Heart right ventricle (tissue), 16 donors: ENCODE measurements at regions of chr1 and their contacts with region 1.

Region 1: DNA sequence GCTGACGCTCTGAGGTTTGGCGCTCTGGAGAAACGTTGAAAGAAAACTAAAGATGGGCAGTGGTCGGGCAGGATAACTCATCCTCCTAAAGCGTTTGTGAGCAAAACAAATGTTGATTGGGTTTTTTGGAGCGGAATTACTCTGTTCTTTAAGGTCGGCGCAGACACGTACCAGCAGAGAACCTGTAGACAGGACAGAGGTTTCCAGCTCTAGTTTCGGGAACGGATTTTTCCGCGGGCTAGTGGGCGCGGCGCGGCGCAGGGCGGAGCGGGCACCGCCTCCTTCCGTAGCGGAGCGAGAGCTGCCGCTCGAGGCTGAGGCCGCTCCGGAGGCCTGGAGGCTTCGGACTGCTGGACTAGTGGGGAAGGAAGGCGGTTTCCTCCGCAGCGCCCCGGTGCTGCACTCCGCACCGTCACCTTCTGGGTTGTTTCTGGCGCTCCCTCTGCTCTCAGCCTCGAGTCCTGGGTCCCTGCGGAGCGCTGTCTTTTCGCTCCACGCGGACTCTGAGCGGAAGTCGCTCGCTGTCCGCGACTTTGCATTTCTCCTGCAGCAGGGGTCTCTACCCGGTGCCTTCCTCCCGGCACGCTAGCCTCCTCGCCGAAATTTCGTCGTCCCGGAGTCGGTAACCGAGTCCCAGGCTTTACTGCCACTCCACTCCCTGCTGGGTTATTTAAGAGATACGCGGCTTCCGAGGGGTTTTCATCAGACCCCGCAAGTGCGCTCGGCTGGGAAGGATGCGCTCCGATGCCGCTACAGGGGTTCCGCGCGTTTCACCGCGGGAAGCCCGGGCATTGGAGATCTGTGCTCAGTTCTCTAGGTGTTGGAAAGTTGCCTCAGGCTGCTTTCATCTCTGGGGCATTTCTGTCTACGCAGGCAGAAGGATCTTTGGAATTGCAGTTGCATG is 7.0 kb downstream of the FOXD2 start:
- DNase-seq: peak in 1 of 2 donors; percentile 29
- ATAC-seq: peak in 7 of 8 donors; percentile 38 to 81 (median 68)
- H3K4me3 ChIP-seq: peak overlapping the region in 7 of 10 donors; percentile 11 to 44 (median 32)
- H3K27ac ChIP-seq: no peak overlapping the region
- H3K4me1 ChIP-seq: peaks cover 6 to 20% (median 11%) of the 10 kb centered on the region in 9 donors
- H3K27me3 ChIP-seq: peaks cover 42 to 100% (median 99%) of the 10 kb centered on the region in 7 donors
- CTCF ChIP-seq: no peak

Region 2: DNA sequence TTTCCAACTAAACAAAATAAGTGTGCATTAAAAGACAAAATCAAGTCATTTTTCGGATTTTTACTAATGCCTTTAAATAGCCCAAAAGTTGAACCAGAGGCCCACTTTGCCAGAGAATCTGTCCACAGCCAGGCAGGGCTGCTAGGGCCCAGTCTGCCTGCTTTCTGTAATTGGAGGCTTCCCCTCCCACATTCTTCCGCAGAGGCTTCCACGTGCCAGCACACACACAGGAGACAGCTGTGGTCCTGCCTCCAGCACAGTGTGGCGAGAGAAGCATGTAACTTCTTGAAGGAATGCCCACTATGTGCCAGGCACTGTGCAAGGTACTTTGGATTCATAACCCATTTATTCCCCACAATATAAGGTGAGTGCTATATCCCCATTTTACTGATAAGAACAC is 243.6 kb before region 1 on chr1:
- intact Hi-C with region 1: no loop called
- DNase-seq: no peak
- ATAC-seq: no peak
- H3K4me3 ChIP-seq: no peak overlapping the region
- H3K27ac ChIP-seq: no peak overlapping the region
- H3K4me1 ChIP-seq: peaks cover 0 to 7% (median 0%) of the 10 kb centered on the region in 9 donors
- H3K27me3 ChIP-seq: peaks cover 0 to 41% (median 0%) of the 10 kb centered on the region in 7 donors
- CTCF ChIP-seq: no peak

Region 3: GRCh38 chr1:47703981-47704596 is 259.3 kb after region 1 on chr1:
- intact Hi-C with region 1: loop called in 1 of 10 experiments (anchors 5 kb)
- DNase-seq: no peak
- ATAC-seq: no peak
- H3K4me3 ChIP-seq: no peak overlapping the region
- H3K27ac ChIP-seq: no peak overlapping the region
- H3K4me1 ChIP-seq: peaks cover 0 to 11% (median 7%) of the 10 kb centered on the region in 9 donors
- H3K27me3 ChIP-seq: peaks cover 3 to 52% (median 41%) of the 10 kb centered on the region in 7 donors
- CTCF ChIP-seq: peak in 5 of 9 donors; percentile 8 to 38 (median 10)